MCF 10A (cell line): ENCODE measurements at regions of chr7 and their contacts with region 1.

Region 1: DNA sequence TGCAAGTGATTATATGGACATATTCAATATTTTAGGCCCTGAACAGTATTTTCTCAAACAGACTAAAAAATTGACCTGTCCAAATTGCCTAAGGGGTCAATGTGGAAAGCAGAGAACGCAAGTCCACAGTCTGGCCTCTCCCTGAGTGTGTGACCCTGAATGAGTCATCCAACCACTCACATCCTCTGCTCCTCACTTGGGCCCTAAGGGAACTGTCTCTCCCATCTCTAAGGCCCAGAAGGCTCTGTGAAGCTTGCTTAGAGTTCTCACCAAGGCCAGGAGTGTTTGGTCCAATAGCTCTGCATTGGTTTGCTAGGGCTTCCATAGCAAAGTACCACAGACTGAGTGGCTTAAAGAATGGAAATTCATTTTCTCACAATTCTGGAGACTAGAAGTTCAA is 155.1 kb downstream of the LSM5 start:
- DNase-seq: peak; percentile 80
- H3K4me3 Mint-ChIP-seq: no peak overlapping the region
- H3K27ac Mint-ChIP-seq: peak overlapping the region; percentile 26
- H3K4me1 Mint-ChIP-seq: peaks cover 14% of the 10 kb centered on the region
- H3K27me3 Mint-ChIP-seq: no peaks in the 10 kb centered on the region
- CTCF ChIP-seq: no peak

Region 2: GRCh38 chr7:32212321-32212720 is 122.8 kb before region 1 on chr7:
- CTCF ChIA-PET with region 1: interaction called, 19 read pairs
- POLR2A ChIA-PET with region 1: no interaction called
- intact Hi-C with region 1: no loop called
- DNase-seq: no peak
- H3K4me3 Mint-ChIP-seq: no peak overlapping the region
- H3K27ac Mint-ChIP-seq: no peak overlapping the region
- H3K4me1 Mint-ChIP-seq: no peaks in the 10 kb centered on the region
- H3K27me3 Mint-ChIP-seq: peaks cover 16% of the 10 kb centered on the region
- CTCF ChIP-seq: no peak